SK-N-SH (cell line): ENCODE measurements at regions of chr19 and their contacts with region 1.

Region 1: GRCh38 chr19:14073261-14073924 is 807 bp downstream of the MISP3 start:
- DNase-seq: peak; percentile 92
- H3K4me3 ChIP-seq: peak overlapping the region; percentile 60 to 85
- H3K27ac ChIP-seq: peak overlapping the region; percentile 24 to 50; a peak in 3 of 4 replicates
- H3K4me1 ChIP-seq: peaks cover 0 to 14% of the 10 kb centered on the region in 2 experiments; a peak in 1 of 4 replicates
- H3K27me3 ChIP-seq: no peaks in the 10 kb centered on the region
- CTCF ChIP-seq: peak; percentile 38
- EP300 ChIP-seq: no peak
- RAD21 ChIP-seq: no peak

Region 2: DNA sequence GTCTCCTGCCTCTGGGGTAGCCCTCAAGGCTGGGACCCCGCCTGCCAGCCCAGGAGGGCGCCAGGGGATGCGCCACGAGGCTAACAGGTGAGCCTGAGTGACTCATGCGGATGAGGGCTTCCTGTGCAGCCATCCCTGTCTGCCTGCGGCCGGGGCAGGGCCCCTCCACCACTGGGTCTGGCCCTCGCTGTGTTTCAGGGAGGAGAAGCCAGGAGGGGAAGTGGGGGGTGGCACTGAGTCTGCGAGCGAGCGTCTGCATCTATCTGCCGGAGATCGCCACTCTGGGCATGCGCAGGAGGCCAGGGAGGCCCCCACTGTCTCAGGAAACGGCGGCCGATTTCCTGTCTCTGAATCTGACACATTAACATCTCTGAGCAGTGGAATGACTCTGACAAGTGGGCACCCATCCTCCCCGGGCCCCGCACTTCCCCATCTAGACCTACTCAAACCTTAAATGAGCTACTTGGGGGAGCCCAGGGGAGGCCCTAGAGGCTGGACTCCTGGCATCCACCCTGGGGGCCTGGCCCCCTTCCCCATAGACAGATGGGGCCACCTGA is 87.0 kb before region 1 on chr19:
- CTCF ChIA-PET with region 1: interaction called, 12 read pairs
- POLR2A ChIA-PET with region 1: no interaction called
- DNase-seq: peak; percentile 97
- H3K4me3 ChIP-seq: no peak overlapping the region
- H3K27ac ChIP-seq: peak overlapping the region; percentile 73 to 87
- H3K4me1 ChIP-seq: peaks cover 16 to 32% of the 10 kb centered on the region in 2 experiments; a peak in 3 of 4 replicates
- H3K27me3 ChIP-seq: no peaks in the 10 kb centered on the region
- CTCF ChIP-seq: no peak
- EP300 ChIP-seq: no peak
- RAD21 ChIP-seq: no peak

Region 3: DNA sequence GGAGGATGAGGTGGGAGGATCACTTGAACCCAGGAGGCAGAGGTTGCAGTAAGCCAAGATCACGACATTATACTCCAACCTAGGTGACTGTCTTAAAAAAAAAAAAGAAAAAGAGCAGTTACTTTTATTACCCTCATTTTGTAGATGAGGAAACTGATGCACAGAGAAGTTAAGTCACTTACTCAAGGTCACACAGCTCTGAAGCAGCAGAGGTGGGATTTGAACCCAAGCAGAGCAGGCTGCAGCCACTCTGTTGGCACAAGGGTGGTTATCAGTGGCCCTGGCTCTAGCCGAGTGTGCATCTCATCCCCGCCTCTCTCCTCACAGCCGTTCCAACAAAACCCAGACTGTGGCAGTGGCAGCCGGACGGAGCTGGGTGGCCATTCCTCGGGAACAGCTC is 34.2 kb before region 1 on chr19:
- CTCF ChIA-PET with region 1: interaction called, 29 read pairs
- POLR2A ChIA-PET with region 1: no interaction called
- DNase-seq: no peak
- H3K4me3 ChIP-seq: no peak overlapping the region
- H3K27ac ChIP-seq: no peak overlapping the region
- H3K4me1 ChIP-seq: no peaks in the 10 kb centered on the region
- H3K27me3 ChIP-seq: no peaks in the 10 kb centered on the region
- CTCF ChIP-seq: no peak
- EP300 ChIP-seq: no peak
- RAD21 ChIP-seq: no peak

Region 4: GRCh38 chr19:14059093-14059480 is 14.3 kb before region 1 on chr19:
- CTCF ChIA-PET with region 1: interaction called, 146 read pairs
- POLR2A ChIA-PET with region 1: interaction called, 4 read pairs
- DNase-seq: peak; percentile 66
- H3K4me3 ChIP-seq: peak overlapping the region in 1 of 2 experiments; percentile 64; a peak in 1 of 4 replicates
- H3K27ac ChIP-seq: no peak overlapping the region
- H3K4me1 ChIP-seq: peaks cover 6 to 10% of the 10 kb centered on the region in 2 experiments; a peak in 2 of 4 replicates
- H3K27me3 ChIP-seq: no peaks in the 10 kb centered on the region
- CTCF ChIP-seq: peak; percentile 76
- EP300 ChIP-seq: no peak
- RAD21 ChIP-seq: no peak

Region 5: DNA sequence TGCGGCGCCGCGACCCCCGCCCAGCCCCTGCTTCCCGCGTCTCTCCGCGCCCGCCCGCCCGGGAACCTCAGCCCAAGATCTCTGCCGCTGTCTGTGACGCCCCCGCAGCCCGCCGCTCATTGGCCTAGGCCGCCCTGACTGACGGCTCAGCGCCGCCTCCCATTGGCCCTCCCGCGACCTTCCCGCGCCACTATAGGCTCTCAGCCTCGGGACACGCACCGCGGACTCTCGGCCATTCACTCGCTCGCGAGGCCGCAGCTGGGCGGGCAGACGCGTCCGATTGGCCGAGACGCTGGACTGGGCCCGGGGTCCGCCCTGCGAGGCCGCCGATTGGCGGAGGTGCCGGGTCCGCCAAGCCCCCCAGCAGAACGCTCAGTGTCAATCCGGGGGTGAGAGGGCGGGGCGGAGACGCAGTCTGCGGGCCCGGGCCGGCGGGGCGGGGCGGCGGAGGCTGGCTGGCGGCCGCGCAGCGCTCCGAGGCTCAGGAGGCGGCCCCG is 44.3 kb after region 1 on chr19 and contains the start of gene PRKACA:
- CTCF ChIA-PET with region 1: interaction called, 18 read pairs
- POLR2A ChIA-PET with region 1: no interaction called
- DNase-seq: peak; percentile 99
- H3K4me3 ChIP-seq: peak within 1 kb of the TSS; percentile 79 to 80
- H3K27ac ChIP-seq: peak within 1 kb of the TSS; percentile 70 to 98
- H3K4me1 ChIP-seq: peaks cover 15 to 36% of the 10 kb centered on the region in 2 experiments
- H3K27me3 ChIP-seq: no peaks in the 10 kb centered on the region
- CTCF ChIP-seq: no peak
- EP300 ChIP-seq: no peak
- RAD21 ChIP-seq: no peak
- polyA plus RNA-seq, gene PRKACA: 17.2 and 48.4 TPM in 2 replicates